Activated T-helper 2 cell treated with anti-CD3 and anti-CD28 coated beads, Interferon-gamma antibody, Interleukin-2, Interleukin-4, amounts not matched to agents 10 μg/mL and 5 μg/mL and 100 μg/mL, durations not matched to agents 14 hours and 24 hours and 36 hours (primary cell): ENCODE measurements at regions of chr20 and their contacts with region 1.

Region 1: GRCh38 chr20:5788385-5788895 is 38.2 kb downstream of the SHLD1 start:
- DNase-seq: peak; percentile 62
- H3K4me3 Mint-ChIP-seq: no peak overlapping the region
- H3K27ac Mint-ChIP-seq: no peak overlapping the region
- H3K4me1 Mint-ChIP-seq: peaks cover 3% of the 10 kb centered on the region
- H3K27me3 Mint-ChIP-seq: no peaks in the 10 kb centered on the region

Region 2: DNA sequence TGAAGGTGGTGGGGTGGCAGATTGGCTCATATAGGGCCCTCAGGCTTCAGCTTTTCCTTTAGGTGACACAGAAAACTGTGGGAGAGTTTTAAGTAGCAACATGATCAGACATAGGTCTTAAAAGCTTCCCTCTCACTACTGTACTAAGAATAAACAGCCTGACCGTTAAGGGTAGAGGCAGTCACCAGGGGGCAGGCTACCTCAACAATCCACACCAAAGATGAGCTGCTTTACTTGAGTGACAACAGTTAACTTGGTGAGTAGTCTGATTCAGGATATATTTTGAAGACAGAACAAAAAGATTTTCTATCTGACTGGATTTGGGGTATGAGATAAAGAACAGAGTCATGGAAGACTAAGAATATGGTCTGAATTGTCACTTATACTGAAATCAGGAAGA is 231.3 kb before region 1 on chr20:
- intact Hi-C with region 1: loop called (anchors 1 kb)
- DNase-seq: peak; percentile 38
- H3K4me3 Mint-ChIP-seq: no peak overlapping the region
- H3K27ac Mint-ChIP-seq: peak overlapping the region; percentile 62
- H3K4me1 Mint-ChIP-seq: peaks cover 8% of the 10 kb centered on the region
- H3K27me3 Mint-ChIP-seq: no peaks in the 10 kb centered on the region

Region 3: GRCh38 chr20:5569021-5569420 is 219.4 kb before region 1 on chr20:
- intact Hi-C with region 1: loop called (anchors 1 kb)
- DNase-seq: peak; percentile 43
- H3K4me3 Mint-ChIP-seq: no peak overlapping the region
- H3K27ac Mint-ChIP-seq: peak overlapping the region; percentile 15
- H3K4me1 Mint-ChIP-seq: peaks cover 25% of the 10 kb centered on the region
- H3K27me3 Mint-ChIP-seq: no peaks in the 10 kb centered on the region

Region 4: DNA sequence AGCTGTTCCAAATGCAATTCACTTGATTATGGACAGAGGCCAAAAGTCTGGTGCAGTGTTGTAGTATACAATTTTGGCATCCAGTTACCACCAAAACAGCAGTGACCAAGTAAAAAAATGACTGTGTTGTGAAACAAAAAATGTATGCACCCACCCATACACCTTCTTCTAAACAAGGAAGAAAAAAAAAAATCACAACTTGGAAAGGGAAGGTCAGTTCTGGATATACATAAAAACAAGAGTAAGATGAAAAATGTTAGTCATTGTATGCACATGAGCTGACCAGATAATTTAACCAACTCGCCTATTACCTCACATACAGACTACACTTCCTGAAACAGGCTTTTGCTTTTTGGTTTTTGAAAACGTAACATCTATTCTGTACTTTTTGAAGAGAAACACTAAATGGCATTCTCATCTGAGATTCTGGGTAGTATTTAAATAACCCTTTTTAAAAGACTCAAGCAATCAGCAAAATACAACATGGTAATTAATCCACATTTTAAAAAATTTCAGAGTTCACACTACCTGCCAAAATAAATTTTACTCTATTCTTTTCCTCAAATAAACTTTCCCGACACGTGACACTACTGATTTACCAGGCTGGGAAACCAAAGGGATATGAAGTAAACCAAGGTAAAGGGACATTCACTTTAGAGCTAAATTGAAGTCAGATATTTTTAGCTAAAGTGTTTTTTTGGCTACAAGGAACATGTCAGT is 179.8 kb before region 1 on chr20:
- intact Hi-C with region 1: loop called (anchors 5 kb)
- DNase-seq: no peak
- H3K4me3 Mint-ChIP-seq: peak overlapping the region; percentile 100
- H3K27ac Mint-ChIP-seq: peak overlapping the region; percentile 82
- H3K4me1 Mint-ChIP-seq: peaks cover 46% of the 10 kb centered on the region
- H3K27me3 Mint-ChIP-seq: no peaks in the 10 kb centered on the region

Region 5: GRCh38 chr20:5848711-5849505 is 60.5 kb after region 1 on chr20:
- intact Hi-C with region 1: no loop called
- DNase-seq: no peak
- H3K4me3 Mint-ChIP-seq: no peak overlapping the region
- H3K27ac Mint-ChIP-seq: peak overlapping the region; percentile 39
- H3K4me1 Mint-ChIP-seq: peaks cover 35% of the 10 kb centered on the region
- H3K27me3 Mint-ChIP-seq: no peaks in the 10 kb centered on the region

Region 6: DNA sequence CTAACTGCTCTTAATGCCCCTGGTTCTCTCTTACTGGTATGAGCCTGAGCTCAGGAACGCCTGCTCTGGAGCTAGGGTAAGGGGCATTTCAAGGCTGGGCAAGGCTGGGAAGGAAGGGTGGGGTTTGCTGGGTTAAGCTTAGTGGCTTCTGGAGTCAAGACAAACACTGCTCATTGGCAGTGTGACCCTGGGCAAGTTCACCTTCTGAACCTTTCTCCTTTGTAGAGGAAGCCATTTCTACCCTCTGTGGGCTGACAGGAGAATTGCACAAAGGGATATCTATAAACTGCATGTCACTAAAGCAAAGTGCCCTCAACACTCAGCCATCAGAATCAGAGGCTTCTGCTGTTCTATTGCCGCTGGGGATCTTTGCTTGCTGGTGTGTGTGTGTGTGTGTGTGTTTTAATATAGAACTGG is 285.7 kb after region 1 on chr20:
- intact Hi-C with region 1: loop called (anchors 5 kb)
- DNase-seq: no peak
- H3K4me3 Mint-ChIP-seq: no peak overlapping the region
- H3K27ac Mint-ChIP-seq: no peak overlapping the region
- H3K4me1 Mint-ChIP-seq: no peaks in the 10 kb centered on the region
- H3K27me3 Mint-ChIP-seq: peaks cover 4% of the 10 kb centered on the region